ENCODE measurements at regions of chr14 and their contacts with region 1.

Region 1: DNA sequence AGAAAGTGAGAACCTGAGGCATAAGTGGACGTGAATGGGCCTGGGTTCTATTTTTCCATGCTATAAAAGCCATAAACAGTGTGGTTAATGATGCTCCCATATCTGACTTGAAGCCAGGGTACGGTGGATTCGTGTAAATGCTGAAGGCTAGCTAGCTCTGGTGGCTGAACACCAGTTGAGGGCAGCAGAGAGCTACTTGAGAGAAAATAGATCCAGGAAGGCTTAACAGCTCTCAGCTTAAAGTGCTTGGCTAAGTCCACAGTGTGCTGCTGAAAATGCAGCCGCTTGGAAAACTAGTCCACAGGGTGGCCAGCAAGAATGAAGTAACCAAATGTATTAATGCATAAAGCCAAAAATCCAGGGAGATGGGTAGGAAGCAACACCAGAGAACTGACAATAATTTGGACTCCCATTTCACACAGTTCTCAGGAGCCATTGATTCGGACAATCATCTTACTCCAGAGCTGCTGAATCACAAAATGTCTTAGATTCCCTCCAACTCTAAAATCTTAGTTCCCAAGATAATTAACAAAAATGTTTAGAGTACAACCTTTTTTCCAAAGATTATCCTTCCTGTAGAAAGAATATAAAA is 15.0 kb upstream of the FOXG1 start:
- DNase-seq: no peak
- ATAC-seq: peak; percentile 78 to 89 (median 86)
- H3K4me3 ChIP-seq: no peak overlapping the region
- H3K27ac ChIP-seq: no peak overlapping the region
- H3K4me1 ChIP-seq: no peaks in the 10 kb centered on the region
- H3K27me3 ChIP-seq: no peaks in the 10 kb centered on the region
- CTCF ChIP-seq: peak; percentile 30 to 66 (median 57)
- POLR2A ChIP-seq: no peak

Region 2: DNA sequence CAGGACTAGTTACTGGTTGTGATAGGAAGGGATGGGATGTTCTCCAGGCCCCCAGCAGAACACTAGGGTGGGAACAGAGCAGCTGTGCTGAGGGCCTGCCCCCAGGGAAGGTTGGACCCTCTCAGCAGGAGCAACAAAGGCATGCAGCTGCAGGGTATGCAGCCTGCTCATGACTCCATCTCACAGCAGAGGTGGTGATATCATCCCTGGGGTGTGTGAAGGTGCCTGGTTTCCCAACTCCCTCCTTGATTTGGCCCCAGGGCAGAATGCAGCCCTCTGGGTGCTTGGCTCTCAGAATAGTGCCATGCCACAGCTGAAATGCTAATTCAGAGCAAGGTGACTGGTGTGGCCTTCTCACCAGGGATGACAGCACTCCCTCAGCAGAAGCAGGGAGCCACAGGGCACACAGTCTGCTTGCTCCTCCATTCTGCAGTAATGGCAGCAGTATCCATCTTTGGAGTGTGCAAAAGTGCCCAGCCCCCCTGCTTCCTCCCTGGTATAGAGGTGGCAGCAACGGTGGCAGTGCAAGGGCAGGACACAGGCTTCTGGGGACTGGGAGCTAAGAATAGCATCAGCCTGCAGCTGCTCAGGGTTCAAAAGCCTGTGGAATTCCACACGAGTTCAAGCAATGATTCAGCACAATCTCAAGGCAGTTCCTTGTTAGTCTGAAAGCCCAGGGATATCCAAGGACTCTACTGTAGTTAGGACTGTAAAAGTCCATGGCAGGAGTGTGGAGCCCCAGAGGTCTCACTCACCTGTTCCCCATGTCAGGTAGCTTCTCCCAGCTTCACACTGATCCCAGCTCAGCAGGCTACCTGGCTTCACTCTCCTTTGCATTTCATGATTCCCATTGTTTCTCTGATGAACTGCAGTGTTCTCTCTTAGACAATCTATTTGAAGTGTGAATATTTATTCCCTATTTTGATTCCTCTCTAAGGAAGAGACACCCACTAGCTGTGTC is 283.1 kb before region 1 on chr14:
- intact Hi-C with region 1: no loop called
- DNase-seq: no peak
- ATAC-seq: no peak
- H3K4me3 ChIP-seq: no peak overlapping the region
- H3K27ac ChIP-seq: no peak overlapping the region
- H3K4me1 ChIP-seq: no peaks in the 10 kb centered on the region
- H3K27me3 ChIP-seq: no peaks in the 10 kb centered on the region
- CTCF ChIP-seq: no peak
- POLR2A ChIP-seq: no peak

Region 3: DNA sequence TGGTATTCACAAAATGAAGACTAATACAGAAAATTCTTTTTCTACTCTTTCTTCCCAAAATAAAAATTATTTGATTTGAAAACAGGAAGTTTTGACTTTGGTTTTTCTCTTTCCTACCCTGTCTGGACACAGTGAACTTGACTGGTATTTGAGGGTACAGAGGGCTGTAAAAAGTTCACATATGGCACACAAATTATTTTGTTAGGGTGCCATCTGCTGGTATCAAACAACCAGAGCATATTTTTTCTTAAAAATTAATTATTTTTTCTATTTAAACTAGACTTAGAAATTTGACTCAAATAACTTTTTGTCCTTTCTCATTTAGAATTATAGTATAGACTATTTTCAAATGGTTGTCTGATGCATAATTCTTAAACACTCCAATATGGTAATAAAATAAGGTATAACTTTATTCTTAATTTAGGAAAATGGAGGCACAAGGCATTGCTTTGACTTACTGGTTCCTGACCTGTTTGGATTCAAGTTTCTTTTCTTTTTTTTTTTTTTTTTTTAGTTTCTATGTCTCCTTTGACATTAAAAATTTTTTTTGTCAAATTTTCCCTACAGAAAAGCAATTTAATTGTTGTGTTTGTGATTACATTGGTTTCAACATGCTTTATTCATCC is 785.4 kb after region 1 on chr14:
- intact Hi-C with region 1: loop called in 1 of 2 experiments (anchors 10 kb)
- DNase-seq: no peak
- ATAC-seq: no peak
- H3K4me3 ChIP-seq: no peak overlapping the region
- H3K27ac ChIP-seq: no peak overlapping the region
- H3K4me1 ChIP-seq: no peaks in the 10 kb centered on the region
- H3K27me3 ChIP-seq: no peaks in the 10 kb centered on the region
- CTCF ChIP-seq: peak; percentile 21 to 51 (median 48)
- POLR2A ChIP-seq: no peak